WTC11 (cell line): ENCODE measurements at regions of chr19 and their contacts with region 1.

Region 1: DNA sequence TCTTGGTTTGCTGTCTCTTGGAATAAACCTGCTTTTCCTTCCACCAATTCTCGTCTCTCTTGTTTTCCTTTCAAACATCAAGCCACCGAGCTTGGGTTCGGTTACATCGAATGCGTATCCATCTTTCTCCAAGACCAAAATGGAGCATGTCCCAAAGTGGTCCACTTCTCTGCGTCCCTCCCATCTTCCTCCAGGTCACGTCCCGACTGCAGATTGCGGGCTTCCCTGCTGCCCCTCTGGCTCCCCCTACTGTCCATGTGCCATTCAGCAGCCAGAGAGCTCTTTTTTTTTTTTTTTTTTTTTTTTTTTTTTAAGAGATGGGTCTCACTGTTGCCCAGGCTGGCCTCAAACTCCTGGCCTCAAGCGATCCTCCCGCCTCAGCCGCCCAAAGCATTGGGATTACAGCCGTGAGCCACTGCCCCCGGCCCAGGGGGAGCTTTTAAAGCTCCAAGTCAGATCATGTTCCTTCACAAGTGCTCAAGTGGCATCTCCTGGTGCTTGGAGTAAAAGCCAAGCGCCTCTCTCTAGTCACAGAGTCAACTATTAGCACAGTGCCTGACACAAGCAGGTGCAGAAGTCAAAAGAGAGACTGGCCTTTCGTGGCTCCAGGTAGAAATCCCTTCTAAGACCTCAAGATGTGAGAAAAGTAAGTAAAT is 10.0 kb downstream of the COL5A3 start:
- DNase-seq: peak; percentile 84
- ATAC-seq: peak; percentile 82
- H3K4me3 Mint-ChIP-seq: no peak overlapping the region
- H3K27ac Mint-ChIP-seq: no peak overlapping the region
- H3K4me1 Mint-ChIP-seq: peaks cover 6% of the 10 kb centered on the region
- H3K27me3 Mint-ChIP-seq: peaks cover 25% of the 10 kb centered on the region
- CTCF ChIP-seq: peak; percentile 75

Region 2: DNA sequence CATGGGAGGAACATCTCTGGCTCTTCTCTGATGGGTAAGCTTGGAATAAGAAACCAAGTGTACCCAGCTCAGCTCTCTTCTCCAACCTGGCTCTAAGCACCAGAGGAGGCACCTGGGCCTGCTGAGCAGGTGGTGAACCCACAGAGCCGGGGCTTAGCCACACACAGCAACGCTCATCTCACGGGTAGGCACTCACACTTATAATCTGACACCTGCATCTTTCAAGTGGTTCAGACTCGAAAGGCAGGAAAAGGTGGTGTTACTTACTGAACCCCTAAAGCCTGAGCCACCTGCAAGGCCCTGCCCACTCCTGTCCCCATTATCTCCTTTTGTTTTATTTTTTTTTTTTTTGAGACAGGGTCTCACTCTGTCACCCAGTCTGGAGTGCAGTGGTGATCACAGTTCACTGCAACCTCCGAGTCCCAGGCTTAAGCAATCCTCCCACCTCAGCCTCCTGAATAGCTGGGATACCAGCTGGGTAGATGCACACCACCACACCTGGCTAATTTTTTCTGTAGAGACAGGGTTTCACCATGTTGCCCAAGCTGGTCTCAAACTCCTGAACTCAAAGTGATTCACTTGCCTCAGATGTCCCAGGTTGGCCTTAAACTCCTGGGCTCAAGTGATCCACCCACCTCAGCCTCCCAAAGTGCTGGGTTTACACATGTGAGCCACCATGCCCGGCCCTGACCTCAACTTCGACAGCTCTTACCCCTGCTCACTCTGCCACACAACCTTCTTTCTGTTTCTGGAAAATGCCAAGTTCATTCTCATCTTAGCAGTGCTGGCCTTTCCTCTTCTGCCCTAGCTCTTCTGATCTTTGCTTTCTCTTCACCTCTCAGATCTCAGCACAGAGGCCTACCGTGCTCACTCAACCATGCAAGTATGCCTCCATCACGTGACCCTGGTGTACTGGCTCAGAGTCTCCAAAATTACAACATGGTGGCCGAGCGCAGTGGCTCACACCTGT is 191.2 kb before region 1 on chr19:
- CTCF ChIA-PET with region 1: no interaction called
- POLR2A ChIA-PET with region 1: no interaction called
- DNase-seq: no peak
- ATAC-seq: no peak
- H3K4me3 Mint-ChIP-seq: no peak overlapping the region
- H3K27ac Mint-ChIP-seq: no peak overlapping the region
- H3K4me1 Mint-ChIP-seq: no peaks in the 10 kb centered on the region
- H3K27me3 Mint-ChIP-seq: no peaks in the 10 kb centered on the region
- CTCF ChIP-seq: no peak

Region 3: DNA sequence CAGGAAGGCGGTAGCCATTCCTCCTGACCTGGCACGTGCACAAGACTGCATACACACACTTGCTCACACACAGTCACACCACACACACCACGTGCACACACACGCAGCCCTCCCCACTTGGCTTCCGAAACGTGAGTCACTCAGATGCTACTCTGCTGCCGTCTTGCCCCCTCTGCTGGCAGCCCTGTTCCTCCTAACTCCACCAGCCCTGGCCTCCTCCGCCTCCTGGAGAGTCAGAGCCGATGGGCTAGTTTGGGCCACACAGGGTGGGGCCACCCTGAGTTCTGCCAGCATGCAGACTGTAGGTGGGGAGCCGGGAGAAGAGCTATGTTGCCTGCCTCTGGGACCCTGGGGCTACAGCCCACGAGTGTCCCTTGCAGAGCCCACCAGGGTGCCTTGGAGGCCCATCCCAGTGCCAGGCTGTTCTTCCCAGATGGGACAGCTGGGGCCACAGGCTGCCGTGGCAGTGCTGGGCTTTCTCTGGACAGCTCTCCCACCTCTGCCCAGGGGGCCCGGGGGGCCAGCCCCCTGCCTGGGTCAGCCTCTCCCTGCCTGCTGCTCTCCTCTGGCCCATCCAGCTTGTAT is 153.1 kb before region 1 on chr19:
- CTCF ChIA-PET with region 1: no interaction called
- POLR2A ChIA-PET with region 1: no interaction called
- DNase-seq: peak; percentile 72
- ATAC-seq: peak; percentile 76
- H3K4me3 Mint-ChIP-seq: no peak overlapping the region
- H3K27ac Mint-ChIP-seq: no peak overlapping the region
- H3K4me1 Mint-ChIP-seq: peaks cover 7% of the 10 kb centered on the region; the same call in 1 of the 2 replicates
- H3K27me3 Mint-ChIP-seq: no peaks in the 10 kb centered on the region
- CTCF ChIP-seq: 0 out of 2 replicates have a peak, but pooled peaks have one; percentile 30

Region 4: GRCh38 chr19:9934132-9934950 is 66.0 kb before region 1 on chr19:
- CTCF ChIA-PET with region 1: interaction called, 75 read pairs
- POLR2A ChIA-PET with region 1: no interaction called
- DNase-seq: peak; percentile 96
- ATAC-seq: peak; percentile 71
- H3K4me3 Mint-ChIP-seq: peak overlapping the region; percentile 91
- H3K27ac Mint-ChIP-seq: peak overlapping the region; percentile 97
- H3K4me1 Mint-ChIP-seq: peaks cover 24% of the 10 kb centered on the region
- H3K27me3 Mint-ChIP-seq: no peaks in the 10 kb centered on the region
- CTCF ChIP-seq: peak; percentile 96

Region 5: DNA sequence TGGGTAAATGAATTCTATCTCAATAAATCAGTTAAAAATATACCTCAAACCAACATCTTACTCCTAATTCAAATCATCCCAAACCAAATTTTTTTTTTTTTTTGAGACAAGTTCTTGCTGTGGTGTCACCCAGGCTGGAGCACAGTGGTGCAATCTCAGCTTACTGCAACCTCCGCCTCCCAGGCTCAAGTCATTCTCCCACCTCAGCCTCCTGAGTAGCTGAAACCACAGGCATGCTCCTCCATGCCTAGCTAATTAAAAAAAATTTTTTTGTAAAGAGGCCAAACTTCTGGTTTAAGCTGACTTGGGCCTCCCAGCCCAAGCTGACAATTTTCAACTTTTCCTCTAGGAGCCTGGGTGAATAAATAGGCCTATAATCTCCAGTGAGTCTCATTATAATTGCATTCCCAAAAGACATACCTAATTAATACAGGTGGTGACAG is 41.9 kb before region 1 on chr19:
- CTCF ChIA-PET with region 1: interaction called, 41 read pairs
- POLR2A ChIA-PET with region 1: no interaction called
- DNase-seq: no peak
- ATAC-seq: no peak
- H3K4me3 Mint-ChIP-seq: no peak overlapping the region
- H3K27ac Mint-ChIP-seq: no peak overlapping the region
- H3K4me1 Mint-ChIP-seq: peaks cover 12% of the 10 kb centered on the region; the same call in 1 of the 2 replicates
- H3K27me3 Mint-ChIP-seq: peaks cover 5% of the 10 kb centered on the region
- CTCF ChIP-seq: no peak

Region 6: DNA sequence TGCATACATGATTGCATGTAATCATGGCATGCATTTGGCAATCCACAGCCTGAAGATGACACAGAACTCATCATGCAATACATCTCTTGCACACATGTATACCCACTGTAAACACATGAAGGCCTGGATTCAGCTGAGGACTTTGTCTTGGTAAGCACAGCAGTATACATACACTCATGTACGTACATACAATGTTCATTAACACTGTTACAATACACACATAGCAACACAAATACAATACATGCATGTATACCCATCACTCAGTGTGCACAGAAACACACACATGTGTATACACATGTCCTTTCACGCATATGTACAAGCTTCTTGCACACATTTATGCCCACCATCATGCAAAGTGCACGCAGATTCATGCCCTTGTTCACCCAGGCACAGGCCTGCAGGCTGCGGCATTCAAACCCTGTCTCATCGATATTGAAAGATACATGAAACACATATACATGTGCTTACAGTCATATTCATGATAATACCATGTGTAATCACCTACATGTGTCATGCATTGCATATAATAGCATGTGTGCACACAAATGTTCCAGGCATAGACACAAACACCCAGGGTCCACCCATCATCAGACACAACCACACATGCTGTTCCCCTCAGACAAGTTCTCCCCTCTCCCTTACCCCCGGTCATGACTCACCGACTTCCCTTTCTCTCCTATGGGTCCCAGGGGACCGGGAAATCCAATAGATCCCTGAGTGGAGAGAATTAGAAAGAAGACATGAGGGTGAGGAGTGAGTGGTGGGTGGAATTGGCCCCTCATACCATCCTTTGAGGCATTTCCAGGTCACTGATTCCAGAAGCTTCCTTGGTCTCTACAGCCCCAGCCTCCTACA is 18.7 kb before region 1 on chr19:
- CTCF ChIA-PET with region 1: interaction called, 71 read pairs
- POLR2A ChIA-PET with region 1: interaction called, 4 read pairs
- DNase-seq: no peak
- ATAC-seq: no peak
- H3K4me3 Mint-ChIP-seq: no peak overlapping the region
- H3K27ac Mint-ChIP-seq: no peak overlapping the region
- H3K4me1 Mint-ChIP-seq: peaks cover 2% of the 10 kb centered on the region
- H3K27me3 Mint-ChIP-seq: no peaks in the 10 kb centered on the region; the same call in 1 of the 2 replicates
- CTCF ChIP-seq: no peak

Region 7: DNA sequence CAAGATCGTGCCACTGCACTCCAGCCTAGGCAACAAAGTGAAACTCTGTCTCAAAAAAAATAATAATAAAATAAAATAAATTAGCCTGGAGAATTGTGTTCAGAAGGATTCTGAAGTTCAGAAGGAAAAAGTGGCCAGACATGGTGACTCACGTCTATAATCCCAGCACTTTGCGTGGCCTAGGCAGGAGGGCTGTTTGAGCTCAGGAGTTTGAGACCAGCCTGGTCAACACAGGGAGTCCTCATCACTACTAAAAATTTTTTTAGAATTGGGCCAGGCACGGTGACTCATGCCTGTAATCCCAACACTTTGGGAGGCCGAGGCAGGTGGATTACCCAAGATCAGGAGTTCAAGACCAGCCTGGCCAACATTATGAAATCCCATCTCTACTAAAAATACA is 18.9 kb after region 1 on chr19:
- CTCF ChIA-PET with region 1: interaction called, 66 read pairs
- POLR2A ChIA-PET with region 1: no interaction called
- DNase-seq: no peak
- ATAC-seq: no peak
- H3K4me3 Mint-ChIP-seq: no peak overlapping the region
- H3K27ac Mint-ChIP-seq: no peak overlapping the region
- H3K4me1 Mint-ChIP-seq: no peaks in the 10 kb centered on the region
- H3K27me3 Mint-ChIP-seq: peaks cover 4% of the 10 kb centered on the region; the same call in 1 of the 2 replicates
- CTCF ChIP-seq: no peak